Activated naive CD4-positive, alpha-beta T cell treated with anti-CD3 and anti-CD28 coated beads, Interleukin-2, amount 10 ng/mL, durations not matched to agents 7 days and 5 days (primary cell): ENCODE measurements at regions of chr18 and their contacts with region 1.

Region 1: DNA sequence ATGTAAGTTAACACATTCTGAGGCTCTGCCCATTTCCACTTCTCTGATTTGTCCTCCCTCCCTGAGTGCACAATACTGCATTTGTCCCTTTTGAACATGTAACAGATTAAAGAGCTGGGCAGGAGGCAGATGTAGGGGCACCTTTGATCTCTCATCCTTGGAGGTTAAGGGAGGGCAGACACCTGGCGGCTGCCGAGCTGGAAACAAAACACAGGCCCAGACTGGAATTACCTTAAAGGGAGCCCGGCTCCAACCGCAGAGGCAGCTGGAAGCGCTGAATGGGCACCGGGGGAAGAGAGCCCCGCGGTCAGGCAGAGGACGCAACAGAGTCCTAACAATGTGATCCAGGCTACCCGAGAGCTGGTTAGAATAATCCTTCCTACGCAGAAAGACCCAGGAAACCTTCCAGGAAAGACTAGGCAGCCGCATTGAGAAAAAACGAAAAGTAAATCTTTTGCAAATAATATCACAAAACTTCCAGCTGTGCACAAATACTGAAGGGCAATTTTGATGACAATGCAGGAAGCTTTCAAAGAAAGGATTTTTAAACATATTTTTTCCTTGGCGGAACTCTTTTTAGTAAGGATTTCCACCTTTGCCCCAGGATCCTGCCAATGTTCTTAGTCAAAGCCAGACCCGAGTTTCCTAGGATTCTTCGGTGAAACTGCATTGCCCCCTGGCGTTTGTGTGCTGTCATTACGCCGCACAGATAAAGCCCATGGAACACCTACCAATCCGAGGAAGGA is 216.0 kb downstream of the TGIF1 start:
- DNase-seq: peak; percentile 79
- H3K4me3 Mint-ChIP-seq: no peak overlapping the region
- H3K27ac Mint-ChIP-seq: no peak overlapping the region
- H3K4me1 Mint-ChIP-seq: peaks cover 31% of the 10 kb centered on the region
- H3K27me3 Mint-ChIP-seq: peaks cover 2% of the 10 kb centered on the region

Region 2: DNA sequence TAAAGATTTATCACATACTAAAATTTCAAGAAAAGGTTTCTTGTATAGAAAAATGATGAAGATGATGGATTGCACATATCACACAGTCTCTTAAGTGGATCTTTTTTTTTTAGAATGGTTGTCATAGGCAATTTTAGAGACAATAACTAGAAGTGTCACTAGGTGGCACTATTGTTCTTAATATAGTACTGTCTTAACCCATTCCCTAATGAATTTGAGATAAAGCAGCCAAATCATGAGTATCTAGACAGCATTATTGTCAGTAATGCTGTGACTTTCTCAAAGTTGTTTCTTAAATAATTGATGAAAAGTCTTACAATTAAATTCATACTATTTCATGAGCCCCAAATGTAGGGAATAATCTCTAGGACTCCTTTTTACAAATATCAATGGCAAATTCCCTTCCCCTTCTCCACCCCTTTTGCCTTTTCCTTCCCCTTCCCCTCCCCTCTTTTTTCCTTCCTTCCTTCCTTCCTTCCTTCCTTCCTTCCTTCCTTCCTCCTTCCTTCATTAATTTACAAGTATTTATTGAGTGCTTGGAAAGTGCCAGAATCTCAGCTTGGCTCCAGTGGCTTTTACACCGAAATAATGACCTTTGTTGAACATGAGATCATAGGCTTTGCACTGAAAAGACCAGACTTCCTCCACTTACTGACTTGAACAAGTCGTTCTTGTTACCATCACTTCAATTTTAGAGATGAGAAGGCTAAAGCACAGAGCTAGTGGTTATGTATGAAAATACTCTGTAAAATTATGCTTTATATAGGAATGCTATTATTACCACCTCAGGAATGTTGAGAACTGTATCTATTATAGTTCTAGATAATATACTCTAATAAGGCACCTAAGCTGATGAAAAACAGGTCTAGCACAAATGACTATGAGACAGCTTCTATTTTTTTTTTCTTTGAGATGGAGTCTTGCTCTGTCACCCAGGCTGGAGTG is 384.2 kb before region 1 on chr18:
- CTCF ChIA-PET with region 1: interaction called, 161 read pairs
- DNase-seq: no peak
- H3K4me3 Mint-ChIP-seq: no peak overlapping the region
- H3K27ac Mint-ChIP-seq: no peak overlapping the region
- H3K4me1 Mint-ChIP-seq: no peaks in the 10 kb centered on the region
- H3K27me3 Mint-ChIP-seq: peaks cover 6% of the 10 kb centered on the region

Region 3: DNA sequence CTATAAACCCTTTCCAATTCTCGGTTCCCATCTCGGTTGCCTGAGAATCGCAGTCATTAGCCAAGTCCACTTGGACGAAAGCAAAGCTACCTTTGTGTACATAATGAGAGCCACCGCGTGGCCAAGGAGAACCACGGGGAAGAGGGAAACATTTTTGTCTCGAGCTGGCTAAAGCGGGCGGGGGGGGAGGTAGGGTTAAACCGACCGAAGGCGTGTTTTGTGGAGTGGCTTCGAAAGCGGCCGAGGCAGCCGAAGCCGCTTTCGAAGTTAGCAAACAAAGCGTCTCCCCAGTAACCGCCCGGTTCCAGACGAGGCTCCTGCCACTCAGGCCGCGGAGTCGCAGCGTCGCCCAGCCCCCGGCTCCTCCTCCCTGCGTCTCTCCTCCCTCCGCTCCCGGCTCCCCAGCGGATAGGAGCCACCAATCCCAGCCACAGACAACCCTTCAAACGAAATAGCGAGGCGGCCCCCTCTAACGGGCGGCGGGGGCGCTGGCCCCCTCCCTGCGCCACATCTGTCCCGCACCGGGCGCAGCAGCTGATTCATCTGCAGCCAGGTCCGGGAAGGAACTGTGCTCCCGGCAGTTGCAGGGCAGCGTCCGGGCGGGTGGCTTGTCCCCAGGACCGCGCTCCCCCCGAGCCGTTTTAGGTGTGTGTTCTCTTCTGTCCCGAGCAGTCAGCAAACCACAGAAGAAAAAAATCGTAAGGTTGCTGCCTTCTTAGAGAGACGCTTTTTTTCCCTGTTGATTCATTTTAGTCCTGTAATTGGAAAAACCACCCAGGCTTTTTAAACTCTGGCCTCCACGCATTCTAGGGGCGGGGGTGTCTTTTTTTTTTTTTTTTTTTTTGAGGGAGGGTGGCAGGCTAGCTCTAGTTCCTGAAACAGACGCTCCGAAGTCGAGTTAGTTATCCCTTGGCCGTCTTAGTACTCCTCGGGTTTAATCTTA is 217.8 kb before region 1 on chr18:
- CTCF ChIA-PET with region 1: interaction called, 49 read pairs
- DNase-seq: peak; percentile 92
- H3K4me3 Mint-ChIP-seq: peak overlapping the region; percentile 94
- H3K27ac Mint-ChIP-seq: peak overlapping the region; percentile 100
- H3K4me1 Mint-ChIP-seq: peaks cover 37% of the 10 kb centered on the region
- H3K27me3 Mint-ChIP-seq: peaks cover 14% of the 10 kb centered on the region

Region 4: DNA sequence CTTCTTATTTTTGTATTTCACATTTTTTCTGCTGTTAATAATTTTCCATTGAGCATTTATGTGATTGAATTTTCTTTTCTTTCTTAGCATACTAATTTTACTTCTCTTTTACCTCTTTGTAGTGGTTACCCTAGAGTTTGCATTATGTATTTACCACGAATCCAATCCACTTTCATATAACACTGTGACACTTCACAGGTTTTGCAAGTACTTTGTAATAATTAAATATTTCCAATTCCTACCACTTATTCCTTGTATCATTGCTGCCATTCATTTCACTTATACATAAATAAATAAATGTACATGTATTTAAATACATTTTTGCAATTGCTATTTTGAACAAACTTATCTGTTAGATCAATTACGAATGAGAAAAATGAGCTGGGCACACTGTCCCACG is 105.2 kb before region 1 on chr18:
- CTCF ChIA-PET with region 1: no interaction called
- DNase-seq: no peak
- H3K4me3 Mint-ChIP-seq: no peak overlapping the region
- H3K27ac Mint-ChIP-seq: no peak overlapping the region
- H3K4me1 Mint-ChIP-seq: no peaks in the 10 kb centered on the region
- H3K27me3 Mint-ChIP-seq: peaks cover 4% of the 10 kb centered on the region

Region 5: GRCh38 chr18:3585656-3586509 is 80.1 kb before region 1 on chr18:
- CTCF ChIA-PET with region 1: interaction called, 34 read pairs
- DNase-seq: peak; percentile 77
- H3K4me3 Mint-ChIP-seq: no peak overlapping the region
- H3K27ac Mint-ChIP-seq: no peak overlapping the region
- H3K4me1 Mint-ChIP-seq: peaks cover 35% of the 10 kb centered on the region
- H3K27me3 Mint-ChIP-seq: peaks cover 2% of the 10 kb centered on the region

Region 6: GRCh38 chr18:3604498-3605408 is 61.2 kb before region 1 on chr18:
- CTCF ChIA-PET with region 1: interaction called, 27 read pairs
- DNase-seq: peak; percentile 49
- H3K4me3 Mint-ChIP-seq: no peak overlapping the region
- H3K27ac Mint-ChIP-seq: no peak overlapping the region
- H3K4me1 Mint-ChIP-seq: peaks cover 11% of the 10 kb centered on the region
- H3K27me3 Mint-ChIP-seq: no peaks in the 10 kb centered on the region